IMR-90 (cell line): ENCODE measurements at regions of chr17 and their contacts with region 1.

Region 1: DNA sequence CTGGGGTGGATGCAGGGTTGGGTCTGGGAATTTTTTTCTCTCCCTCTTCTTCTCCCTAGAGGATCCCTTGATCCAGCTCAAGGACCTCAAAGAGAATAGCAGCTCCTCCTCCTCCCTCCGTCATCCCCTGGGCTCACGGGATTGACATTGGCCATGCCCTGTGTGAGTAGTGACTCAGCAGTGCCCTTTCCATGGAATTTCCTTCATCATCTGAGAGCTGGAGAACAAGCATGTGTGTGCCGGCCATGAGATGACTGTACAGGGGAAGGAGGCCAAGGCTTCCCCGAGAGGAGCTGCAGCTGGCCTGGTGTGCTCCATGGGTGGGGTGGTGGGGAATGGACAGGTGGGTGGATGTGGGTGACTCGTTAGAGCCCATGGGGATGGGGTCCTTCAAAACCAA is 8.9 kb upstream of the WSCD1 start:
- DNase-seq: peak; percentile 4
- ATAC-seq: no peak
- H3K4me3 ChIP-seq: no peak overlapping the region
- H3K27ac ChIP-seq: no peak overlapping the region
- H3K4me1 ChIP-seq: no peaks in the 10 kb centered on the region
- H3K27me3 ChIP-seq: no peaks in the 10 kb centered on the region
- CTCF ChIP-seq: no peak
- POLR2A ChIP-seq: no peak
- RAD21 ChIP-seq: no peak

Region 2: DNA sequence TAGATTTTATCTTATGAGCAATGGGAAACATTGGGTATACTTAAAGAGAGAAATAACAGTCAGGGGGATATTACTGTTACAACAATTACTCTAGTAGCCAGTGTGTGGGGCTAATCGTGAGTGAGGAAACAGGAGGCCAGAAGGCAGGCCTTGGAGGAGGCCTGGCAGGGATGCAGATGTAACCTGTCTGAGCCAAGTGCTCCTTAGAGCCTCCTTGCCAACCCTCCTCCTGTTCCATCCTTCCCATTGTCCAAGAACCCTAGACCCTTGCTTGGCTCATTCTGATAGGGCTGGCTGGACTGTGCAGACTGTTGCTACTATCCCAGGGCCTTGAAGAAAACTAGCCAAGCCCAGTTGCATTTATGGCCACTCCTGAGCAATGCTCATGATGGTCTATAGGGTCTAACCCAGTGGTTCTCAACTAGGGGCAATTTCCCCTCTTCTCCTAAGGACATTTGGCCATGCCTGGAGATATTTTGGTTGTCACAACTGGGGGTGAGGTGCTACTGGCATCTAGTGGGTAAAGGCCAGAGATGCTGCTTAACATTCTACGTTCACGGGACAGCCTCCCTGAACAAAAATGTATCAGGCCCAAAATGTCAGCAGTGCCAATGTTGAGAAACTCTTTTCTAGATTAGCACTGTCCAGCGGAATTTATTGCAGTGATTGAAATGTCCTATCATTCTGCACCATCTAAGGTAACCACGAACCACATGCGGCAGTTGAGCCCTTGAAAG is 15.5 kb before region 1 on chr17:
- CTCF ChIA-PET with region 1: no interaction called
- POLR2A ChIA-PET with region 1: no interaction called
- dilution Hi-C with region 1: no loop called
- in situ Hi-C with region 1: no loop called
- intact Hi-C with region 1: loop called (anchors 1 kb)
- DNase-seq: no peak
- ATAC-seq: no peak
- H3K4me3 ChIP-seq: no peak overlapping the region
- H3K27ac ChIP-seq: no peak overlapping the region
- H3K4me1 ChIP-seq: no peaks in the 10 kb centered on the region
- H3K27me3 ChIP-seq: no peaks in the 10 kb centered on the region
- CTCF ChIP-seq: no peak
- POLR2A ChIP-seq: no peak
- RAD21 ChIP-seq: 0 out of 2 replicates have a peak, but pooled peaks have one; percentile 4